Activated CD4-positive, alpha-beta T cell treated with anti-CD3 and anti-CD28 coated beads for 36 hours (primary cell): ENCODE measurements at regions of chr19 and their contacts with region 1.

Region 1: GRCh38 chr19:1592755-1593500 is at the start of gene MBD3:
- DNase-seq: peak; percentile 93
- ATAC-seq: peak; percentile 85
- H3K4me3 Mint-ChIP-seq: peak within 1 kb of the TSS; percentile 94
- H3K27ac Mint-ChIP-seq: peak within 1 kb of the TSS; percentile 93
- H3K4me1 Mint-ChIP-seq: peaks cover 20% of the 10 kb centered on the region
- H3K27me3 Mint-ChIP-seq: no peaks in the 10 kb centered on the region
- total RNA-seq, gene MBD3: 68.9 to 87.5 TPM

Region 2: GRCh38 chr19:1355568-1356507 is 237.1 kb before region 1 on chr19:
- CTCF ChIA-PET with region 1: no interaction called
- POLR2A ChIA-PET with region 1: no interaction called
- intact Hi-C with region 1: loop called in 1 of 2 experiments (anchors 2 kb)
- DNase-seq: peak; percentile 51
- ATAC-seq: no peak
- H3K4me3 Mint-ChIP-seq: peak overlapping the region; percentile 77
- H3K27ac Mint-ChIP-seq: peak overlapping the region; percentile 49
- H3K4me1 Mint-ChIP-seq: peaks cover 9% of the 10 kb centered on the region
- H3K27me3 Mint-ChIP-seq: no peaks in the 10 kb centered on the region

Region 3: DNA sequence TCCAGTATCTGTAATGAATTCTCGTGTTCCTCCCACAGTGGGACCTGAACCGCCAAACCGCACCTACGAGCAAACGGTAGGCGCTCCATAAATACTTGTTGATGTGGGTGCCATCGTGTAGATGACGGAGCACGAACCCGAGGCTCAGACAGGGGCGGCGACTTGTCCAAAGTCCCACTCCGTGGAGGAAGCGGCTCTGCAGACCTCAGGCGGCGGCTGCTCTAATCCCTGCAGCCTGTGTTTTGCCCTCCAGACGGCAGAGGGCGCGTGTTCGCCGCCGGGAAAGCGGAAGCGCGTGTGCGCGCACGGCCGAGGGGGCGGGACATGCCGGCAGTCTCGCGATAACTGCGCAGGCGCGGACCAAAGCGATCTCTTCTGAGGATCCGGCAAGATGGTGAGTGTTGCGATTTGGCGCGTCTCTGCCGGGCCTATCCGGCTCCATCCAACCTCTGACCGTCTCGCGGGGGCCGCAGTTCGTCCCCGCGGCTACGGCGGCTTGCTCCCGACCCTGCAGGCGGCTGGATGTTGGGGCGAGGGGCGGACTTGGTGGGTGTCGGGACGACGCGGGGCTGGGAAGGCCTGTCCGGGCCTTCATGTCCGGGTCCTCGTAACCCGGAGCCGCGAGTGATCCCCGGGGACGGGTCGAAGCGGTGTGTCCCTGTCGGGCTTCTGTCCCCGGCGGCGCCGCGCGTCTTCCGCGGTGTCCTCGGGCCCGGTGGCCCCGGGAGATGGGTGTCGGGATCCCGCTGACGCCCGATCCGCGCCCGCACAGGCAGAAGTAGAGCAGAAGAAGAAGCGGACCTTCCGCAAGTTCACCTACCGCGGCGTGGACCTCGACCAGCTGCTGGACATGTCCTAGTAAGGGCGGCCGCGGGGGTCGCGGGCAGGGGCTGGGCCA is 154.6 kb before region 1 on chr19 and contains the start of gene RPS15:
- CTCF ChIA-PET with region 1: no interaction called
- POLR2A ChIA-PET with region 1: no interaction called
- intact Hi-C with region 1: loop called in 1 of 2 experiments (anchors 1 kb)
- DNase-seq: peak; percentile 98
- ATAC-seq: peak; percentile 86
- H3K4me3 Mint-ChIP-seq: peak within 1 kb of the TSS; percentile 94
- H3K27ac Mint-ChIP-seq: peak within 1 kb of the TSS; percentile 99
- H3K4me1 Mint-ChIP-seq: peaks cover 34% of the 10 kb centered on the region
- H3K27me3 Mint-ChIP-seq: no peaks in the 10 kb centered on the region
- total RNA-seq, gene RPS15: 1,716 to 1,858 TPM

Region 4: GRCh38 chr19:1568320-1569019 is 24.5 kb before region 1 on chr19 and contains the start of gene MEX3D:
- CTCF ChIA-PET with region 1: no interaction called
- POLR2A ChIA-PET with region 1: interaction called, 3 read pairs
- intact Hi-C with region 1: loop called in 1 of 2 experiments (anchors 1 kb)
- DNase-seq: peak; percentile 90
- ATAC-seq: peak; percentile 88
- H3K4me3 Mint-ChIP-seq: no peak within 1 kb of the TSS
- H3K27ac Mint-ChIP-seq: no peak within 1 kb of the TSS
- H3K4me1 Mint-ChIP-seq: no peaks in the 10 kb centered on the region
- H3K27me3 Mint-ChIP-seq: peaks cover 7% of the 10 kb centered on the region
- total RNA-seq, gene MEX3D: 6.2 to 6.7 TPM

Region 5: DNA sequence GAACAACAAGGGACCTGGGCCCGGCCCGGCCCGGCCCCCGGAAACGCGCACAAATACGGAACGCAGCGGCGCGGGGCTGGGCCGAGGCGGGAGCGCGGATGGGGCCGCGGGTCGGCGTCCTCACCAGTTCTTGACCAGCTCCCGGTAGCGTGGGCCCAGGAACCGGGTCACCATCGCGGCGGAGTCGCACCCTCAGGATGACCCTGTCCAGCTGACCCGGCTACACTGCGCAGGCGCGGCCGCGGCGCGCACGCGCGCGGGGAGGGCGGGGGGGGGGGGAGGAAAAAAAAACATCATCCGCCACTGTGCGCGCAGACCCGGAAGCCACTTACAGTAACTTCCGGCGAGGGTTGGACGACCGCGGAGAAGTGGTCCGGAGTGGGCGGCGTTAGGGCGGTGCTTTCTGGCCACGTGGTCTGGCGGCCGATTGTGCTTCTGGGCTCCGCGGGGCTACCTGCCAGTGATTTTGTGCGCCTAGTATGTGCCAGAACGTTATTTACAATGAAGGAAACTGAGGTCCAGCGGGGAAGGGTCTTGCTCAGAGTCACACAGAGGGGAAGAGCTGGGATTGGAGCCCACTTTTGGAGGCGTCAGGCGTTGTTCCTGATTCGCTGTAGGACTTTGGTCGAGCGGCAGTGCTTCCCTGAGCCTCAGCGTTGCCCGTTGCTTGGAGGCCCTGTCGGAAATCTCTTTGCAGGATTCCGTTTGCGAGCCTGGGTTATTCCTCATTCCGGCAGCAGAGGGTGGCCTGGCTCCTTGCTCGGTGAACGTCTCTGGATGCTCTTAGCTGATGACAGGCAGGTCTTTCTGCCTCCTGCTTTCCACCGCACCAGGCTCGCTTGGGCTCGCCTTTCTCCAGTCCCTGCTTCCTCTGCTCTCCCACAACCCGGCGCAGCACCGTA is 12.6 kb after region 1 on chr19 and contains the start of gene UQCR11:
- CTCF ChIA-PET with region 1: interaction called, 7 read pairs
- POLR2A ChIA-PET with region 1: interaction called, 10 read pairs
- intact Hi-C with region 1: loop called (anchors 1 kb)
- DNase-seq: peak; percentile 96
- ATAC-seq: peak; percentile 89
- H3K4me3 Mint-ChIP-seq: peak within 1 kb of the TSS; percentile 97
- H3K27ac Mint-ChIP-seq: peak within 1 kb of the TSS; percentile 99
- H3K4me1 Mint-ChIP-seq: peaks cover 52% of the 10 kb centered on the region
- H3K27me3 Mint-ChIP-seq: no peaks in the 10 kb centered on the region
- total RNA-seq, gene UQCR11: 152 to 226 TPM

Region 6: GRCh38 chr19:1848399-1849131 is 255.6 kb after region 1 on chr19 and contains the start of gene REXO1:
- CTCF ChIA-PET with region 1: no interaction called
- POLR2A ChIA-PET with region 1: interaction called, 3 read pairs
- intact Hi-C with region 1: loop called in 1 of 2 experiments (anchors 1 kb)
- DNase-seq: peak; percentile 98
- ATAC-seq: peak; percentile 72
- H3K4me3 Mint-ChIP-seq: peak within 1 kb of the TSS; percentile 92
- H3K27ac Mint-ChIP-seq: peak within 1 kb of the TSS; percentile 88
- H3K4me1 Mint-ChIP-seq: peaks cover 65% of the 10 kb centered on the region
- H3K27me3 Mint-ChIP-seq: no peaks in the 10 kb centered on the region
- total RNA-seq, gene REXO1: 39.3 to 49.8 TPM